ENCODE measurements at regions of chr13 and their contacts with region 1.

Region 1: DNA sequence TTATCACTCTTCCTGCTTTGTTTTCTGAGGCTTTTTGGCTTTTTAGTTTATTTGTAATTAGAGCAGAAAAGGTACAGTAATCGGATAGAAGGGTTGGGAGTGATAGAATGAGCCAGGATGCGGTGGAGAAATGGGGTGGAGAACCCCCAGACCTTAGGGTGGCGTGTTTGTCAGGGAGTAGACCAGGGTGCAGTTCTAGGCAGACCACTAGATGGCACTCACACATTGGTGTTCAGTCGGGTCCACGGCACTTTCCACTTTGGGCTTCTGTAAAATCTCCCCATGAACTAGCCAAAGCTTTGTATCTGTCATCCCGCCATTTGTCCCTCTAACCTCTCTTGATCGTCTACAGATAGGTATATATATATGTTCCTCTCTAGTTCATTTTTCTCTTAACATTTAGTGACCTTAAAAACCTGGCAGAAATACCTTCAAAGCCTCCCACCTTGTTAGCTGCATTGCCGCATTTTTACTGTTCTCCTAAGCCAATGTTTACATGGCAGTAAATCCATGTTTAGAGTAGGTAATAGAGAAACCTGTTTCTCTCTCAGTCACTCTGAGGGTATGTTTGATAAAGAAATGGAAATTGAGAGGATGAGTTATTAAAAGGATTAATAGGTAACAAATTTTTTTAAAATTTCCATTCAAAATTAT is 154.9 kb downstream of the TM9SF2 start:
- DNase-seq: peak; percentile 40
- ATAC-seq: peak; percentile 92
- H3K4me3 ChIP-seq: no peak overlapping the region
- H3K27ac ChIP-seq: no peak overlapping the region
- H3K4me1 ChIP-seq: peaks cover 7% of the 10 kb centered on the region
- H3K27me3 ChIP-seq: no peaks in the 10 kb centered on the region
- CTCF ChIP-seq: peak; percentile 91 to 93 (median 91)
- EP300 ChIP-seq: no peak
- POLR2A ChIP-seq: no peak
- RAD21 ChIP-seq: peak; percentile 88

Region 2: DNA sequence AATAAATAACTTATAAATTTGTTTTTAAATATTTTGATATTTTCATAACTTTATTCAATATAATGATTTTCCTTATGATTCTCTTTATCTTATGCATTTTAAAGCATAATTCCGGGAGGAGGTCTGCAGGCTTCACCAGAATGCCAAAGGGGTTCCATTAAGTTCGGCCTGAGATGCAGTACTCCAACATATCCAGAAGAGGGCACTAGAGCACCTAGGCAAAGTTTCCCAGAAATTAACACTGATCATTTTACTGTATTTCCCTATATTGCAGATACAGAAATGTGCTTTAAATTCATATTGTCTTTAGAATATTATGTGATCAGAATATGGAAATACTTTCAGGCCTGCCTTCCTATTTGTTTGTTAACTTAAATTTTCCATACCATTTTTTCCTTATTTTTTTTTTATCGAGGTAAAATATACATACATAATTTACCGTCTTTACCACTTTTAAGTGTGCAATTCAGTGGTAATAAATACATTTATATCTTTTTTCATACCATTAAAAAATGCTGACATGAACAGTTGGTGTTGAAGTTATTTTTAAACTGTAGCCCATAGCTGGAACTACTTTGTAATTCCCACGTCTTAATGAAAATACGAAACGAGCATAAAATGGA is 213.8 kb before region 1 on chr13:
- CTCF ChIA-PET with region 1: interaction called, 5 read pairs
- POLR2A ChIA-PET with region 1: no interaction called
- RAD21 ChIA-PET with region 1: interaction called, 3 read pairs
- SMC1A ChIA-PET with region 1: no interaction called
- in situ Hi-C with region 1: no loop called
- intact Hi-C with region 1: loop called (anchors 2 kb)
- DNase-seq: no peak
- ATAC-seq: peak; percentile 77
- H3K4me3 ChIP-seq: no peak overlapping the region
- H3K27ac ChIP-seq: no peak overlapping the region
- H3K4me1 ChIP-seq: 0 out of 2 replicates have a peak, but pooled peaks cover 2% of the 10 kb centered on the region
- H3K27me3 ChIP-seq: peaks cover 2 to 4% of the 10 kb centered on the region in 2 experiments; a peak in 2 of 4 replicates
- CTCF ChIP-seq: peak; percentile 81 to 93 (median 88)
- EP300 ChIP-seq: no peak
- POLR2A ChIP-seq: no peak
- RAD21 ChIP-seq: peak; percentile 96

Region 3: DNA sequence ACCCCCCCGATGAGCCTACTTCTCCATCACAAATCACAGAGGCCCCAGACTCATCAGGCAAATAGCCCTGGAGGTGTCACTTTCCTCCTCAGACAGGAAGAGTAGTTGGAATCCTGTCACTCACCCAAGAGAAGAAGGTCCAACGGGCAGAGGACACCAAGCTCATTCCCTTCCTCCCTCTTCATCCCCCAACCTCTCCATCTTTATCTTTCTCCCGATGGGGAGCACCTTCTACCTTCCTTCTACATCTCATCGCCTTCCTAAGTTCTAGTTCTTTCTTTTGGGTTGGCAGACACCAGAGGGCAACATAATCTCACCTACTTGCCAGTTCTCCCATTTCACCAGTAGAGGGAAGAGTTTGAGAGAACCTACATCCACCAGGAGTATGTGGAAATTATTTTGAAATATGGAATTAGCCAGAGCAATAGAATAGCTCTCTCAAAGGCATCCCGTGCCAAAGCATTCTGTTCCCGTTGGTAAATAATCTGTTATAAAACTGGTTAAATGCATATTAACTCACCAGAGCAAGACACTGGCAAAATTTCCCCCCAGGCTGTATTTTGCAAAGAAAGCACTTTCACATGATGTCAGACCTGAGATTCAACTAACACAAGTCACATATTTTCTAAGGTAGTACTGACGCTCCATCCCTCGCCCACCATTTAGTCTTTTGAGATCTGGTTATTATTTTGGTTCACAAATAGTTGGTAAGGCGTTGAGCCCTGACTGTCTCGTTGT is 260.3 kb after region 1 on chr13:
- CTCF ChIA-PET with region 1: interaction called, 8 read pairs
- POLR2A ChIA-PET with region 1: no interaction called
- RAD21 ChIA-PET with region 1: no interaction called
- SMC1A ChIA-PET with region 1: interaction called, 5 read pairs
- in situ Hi-C with region 1: no loop called
- intact Hi-C with region 1: loop called (anchors 5 kb)
- DNase-seq: peak; percentile 31
- ATAC-seq: peak; percentile 95
- H3K4me3 ChIP-seq: no peak overlapping the region
- H3K27ac ChIP-seq: no peak overlapping the region
- H3K4me1 ChIP-seq: no peaks in the 10 kb centered on the region
- H3K27me3 ChIP-seq: no peaks in the 10 kb centered on the region
- CTCF ChIP-seq: peak; percentile 91 to 99 (median 93)
- EP300 ChIP-seq: no peak
- POLR2A ChIP-seq: no peak
- RAD21 ChIP-seq: peak; percentile 86

Region 4: GRCh38 chr13:100514788-100515409 is 858.7 kb after region 1 on chr13:
- CTCF ChIA-PET with region 1: interaction called, 23 read pairs
- POLR2A ChIA-PET with region 1: no interaction called
- RAD21 ChIA-PET with region 1: interaction called, 8 read pairs
- SMC1A ChIA-PET with region 1: interaction called, 6 read pairs
- in situ Hi-C with region 1: loop called (anchors 5 kb)
- intact Hi-C with region 1: loop called (anchors 1 kb)
- DNase-seq: peak; percentile 27
- ATAC-seq: peak; percentile 99
- H3K4me3 ChIP-seq: no peak overlapping the region
- H3K27ac ChIP-seq: no peak overlapping the region
- H3K4me1 ChIP-seq: peaks cover 4% of the 10 kb centered on the region; the same call in 1 of the 2 replicates
- H3K27me3 ChIP-seq: no peaks in the 10 kb centered on the region
- CTCF ChIP-seq: peak; percentile 90 to 97 (median 95)
- EP300 ChIP-seq: no peak
- POLR2A ChIP-seq: no peak
- RAD21 ChIP-seq: peak; percentile 95

Region 5: GRCh38 chr13:101127741-101128353 is 1471.6 kb after region 1 on chr13:
- CTCF ChIA-PET with region 1: interaction called, 4 read pairs
- POLR2A ChIA-PET with region 1: no interaction called
- RAD21 ChIA-PET with region 1: interaction called, 3 read pairs
- SMC1A ChIA-PET with region 1: interaction called, 3 read pairs
- in situ Hi-C with region 1: loop called (anchors 10 kb)
- intact Hi-C with region 1: loop called (anchors 5 kb)
- DNase-seq: no peak
- ATAC-seq: peak; percentile 90
- H3K4me3 ChIP-seq: no peak overlapping the region
- H3K27ac ChIP-seq: no peak overlapping the region
- H3K4me1 ChIP-seq: no peaks in the 10 kb centered on the region
- H3K27me3 ChIP-seq: no peaks in the 10 kb centered on the region
- CTCF ChIP-seq: peak; percentile 61 to 76 (median 68)
- EP300 ChIP-seq: no peak
- POLR2A ChIP-seq: no peak
- RAD21 ChIP-seq: peak; percentile 75

Measured in GM12878 (cell line).